Spleen (tissue), 13 donors: ENCODE measurements at regions of chr6 and their contacts with region 1.

Region 1: GRCh38 chr6:28838634-28839442 is 84.9 kb downstream of the TRIM27 start:
- DNase-seq: peak; percentile 93
- H3K4me3 ChIP-seq: peak overlapping the region; percentile 54 to 89 (median 58)
- H3K27ac ChIP-seq: peak overlapping the region; percentile 50 to 86 (median 75)
- H3K4me1 ChIP-seq: peaks cover 5 to 33% (median 23%) of the 10 kb centered on the region in 6 donors
- H3K27me3 ChIP-seq: peaks cover 0 to 72% (median 15%) of the 10 kb centered on the region in 7 donors
- CTCF ChIP-seq: peak in 10 of 11 experiments; percentile 23 to 73 (median 54)
- POLR2A ChIP-seq: no peak

Region 2: GRCh38 chr6:27879837-27880236 is 959.0 kb before region 1 on chr6:
- intact Hi-C with region 1: no loop called
- DNase-seq: no peak
- H3K4me3 ChIP-seq: no peak overlapping the region
- H3K27ac ChIP-seq: no peak overlapping the region
- H3K4me1 ChIP-seq: no peaks in the 10 kb centered on the region
- H3K27me3 ChIP-seq: no peaks in the 10 kb centered on the region
- CTCF ChIP-seq: no peak
- POLR2A ChIP-seq: no peak

Region 3: DNA sequence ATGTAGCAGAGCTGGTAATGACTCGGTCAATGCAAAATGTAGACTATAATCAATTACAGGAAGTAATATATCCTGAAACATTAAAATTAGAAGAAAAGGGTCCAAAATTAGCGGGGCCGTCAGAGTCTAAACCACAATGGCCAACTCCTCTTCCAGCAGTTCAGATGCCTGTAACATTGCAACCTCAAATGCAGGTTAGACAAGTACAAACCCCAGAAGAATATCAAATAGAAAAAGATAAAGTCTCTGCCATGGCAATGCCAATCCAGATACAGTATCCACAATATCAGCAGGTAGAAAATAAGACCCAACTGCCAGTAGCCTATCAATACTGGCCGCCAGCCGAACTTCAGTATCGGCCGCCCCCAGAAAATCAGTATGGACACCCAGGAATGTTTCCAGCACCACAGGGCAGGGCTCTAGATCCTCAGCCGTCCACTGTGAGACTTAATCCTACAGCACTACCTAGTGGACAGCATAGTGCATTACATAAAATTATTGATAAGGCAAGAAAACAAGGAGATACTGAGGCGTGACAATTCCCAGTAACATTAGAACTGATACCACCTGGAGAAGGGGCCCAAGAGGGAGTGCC is 154.8 kb before region 1 on chr6:
- intact Hi-C with region 1: loop called (anchors 10 kb)
- DNase-seq: no peak
- H3K4me3 ChIP-seq: no peak overlapping the region
- H3K27ac ChIP-seq: no peak overlapping the region
- H3K4me1 ChIP-seq: peaks cover 0 to 9% (median 0%) of the 10 kb centered on the region in 6 donors
- H3K27me3 ChIP-seq: peaks cover 0 to 86% (median 31%) of the 10 kb centered on the region in 7 donors
- CTCF ChIP-seq: peak in 10 of 11 experiments; percentile 18 to 58 (median 40)
- POLR2A ChIP-seq: no peak

Region 4: GRCh38 chr6:29016559-29017427 is 178.0 kb after region 1 on chr6:
- intact Hi-C with region 1: loop called (anchors 5 kb)
- DNase-seq: peak; percentile 91
- H3K4me3 ChIP-seq: peak overlapping the region; percentile 31 to 74 (median 46)
- H3K27ac ChIP-seq: peak overlapping the region in 3 of 8 donors; percentile 30 to 50 (median 38)
- H3K4me1 ChIP-seq: peaks cover 0 to 17% (median 14%) of the 10 kb centered on the region in 6 donors
- H3K27me3 ChIP-seq: peaks cover 0 to 70% (median 39%) of the 10 kb centered on the region in 7 donors
- CTCF ChIP-seq: peak; percentile 57 to 90 (median 83)
- POLR2A ChIP-seq: no peak